MCF 10A (cell line): ENCODE measurements at regions of chr2 and their contacts with region 1.

Region 1: GRCh38 chr2:100818606-100819369 is 1.2 kb upstream of the NPAS2 start:
- DNase-seq: peak; percentile 51
- H3K4me3 Mint-ChIP-seq: peak overlapping the region; percentile 83
- H3K27ac Mint-ChIP-seq: peak overlapping the region; percentile 51
- H3K4me1 Mint-ChIP-seq: peaks cover 36% of the 10 kb centered on the region
- H3K27me3 Mint-ChIP-seq: no peaks in the 10 kb centered on the region
- CTCF ChIP-seq: peak; percentile 23

Region 2: DNA sequence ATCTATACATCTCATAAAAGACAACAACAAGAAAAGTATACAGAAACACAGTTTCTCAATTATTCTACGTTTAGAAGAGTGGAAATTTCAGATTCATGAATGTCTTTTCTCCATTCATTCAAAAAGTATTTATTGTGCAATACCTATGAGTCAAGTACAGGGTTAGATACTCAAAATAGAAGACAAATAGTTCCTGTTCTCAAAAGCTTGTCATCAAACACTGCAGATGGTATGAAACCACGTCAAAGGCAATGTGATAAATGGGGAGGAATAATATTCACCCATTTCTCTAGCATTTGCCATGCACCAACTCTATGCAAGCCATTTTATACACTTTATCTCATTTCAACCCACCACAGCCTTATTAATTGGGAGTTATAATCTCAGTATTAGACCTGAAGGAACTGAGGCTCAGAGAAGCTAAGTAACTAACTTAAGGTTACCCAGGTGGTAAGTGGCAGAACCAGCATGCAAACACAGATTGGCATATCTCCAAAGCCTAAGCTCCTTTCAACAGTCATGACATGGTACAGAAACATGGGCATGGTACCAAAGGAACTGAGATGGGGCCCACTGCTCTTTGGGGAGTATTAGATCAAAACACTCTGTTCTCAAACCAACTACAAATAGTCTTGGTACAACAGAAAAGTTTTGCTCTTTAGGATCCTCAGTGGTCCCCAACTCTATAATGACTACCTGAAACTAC is 66.0 kb before region 1 on chr2:
- CTCF ChIA-PET with region 1: interaction called, 3 read pairs
- POLR2A ChIA-PET with region 1: interaction called, 9 read pairs
- intact Hi-C with region 1: loop called (anchors 2 kb)
- DNase-seq: peak; percentile 83
- H3K4me3 Mint-ChIP-seq: no peak overlapping the region
- H3K27ac Mint-ChIP-seq: peak overlapping the region; percentile 97
- H3K4me1 Mint-ChIP-seq: peaks cover 57% of the 10 kb centered on the region
- H3K27me3 Mint-ChIP-seq: no peaks in the 10 kb centered on the region
- CTCF ChIP-seq: no peak

Region 3: GRCh38 chr2:100800915-100801314 is 17.9 kb before region 1 on chr2:
- CTCF ChIA-PET with region 1: no interaction called
- POLR2A ChIA-PET with region 1: interaction called, 11 read pairs
- intact Hi-C with region 1: no loop called
- DNase-seq: no peak
- H3K4me3 Mint-ChIP-seq: no peak overlapping the region
- H3K27ac Mint-ChIP-seq: peak overlapping the region; percentile 36
- H3K4me1 Mint-ChIP-seq: peaks cover 24% of the 10 kb centered on the region
- H3K27me3 Mint-ChIP-seq: no peaks in the 10 kb centered on the region
- CTCF ChIP-seq: no peak

Region 4: GRCh38 chr2:100984892-100985379 is 166.1 kb after region 1 on chr2:
- CTCF ChIA-PET with region 1: interaction called, 3 read pairs
- POLR2A ChIA-PET with region 1: no interaction called
- intact Hi-C with region 1: loop called (anchors 1 kb)
- DNase-seq: peak; percentile 75
- H3K4me3 Mint-ChIP-seq: no peak overlapping the region
- H3K27ac Mint-ChIP-seq: no peak overlapping the region
- H3K4me1 Mint-ChIP-seq: peaks cover 5% of the 10 kb centered on the region
- H3K27me3 Mint-ChIP-seq: no peaks in the 10 kb centered on the region
- CTCF ChIP-seq: peak; percentile 91